ENCODE measurements at regions of chr2 and their contacts with region 1.

Region 1: DNA sequence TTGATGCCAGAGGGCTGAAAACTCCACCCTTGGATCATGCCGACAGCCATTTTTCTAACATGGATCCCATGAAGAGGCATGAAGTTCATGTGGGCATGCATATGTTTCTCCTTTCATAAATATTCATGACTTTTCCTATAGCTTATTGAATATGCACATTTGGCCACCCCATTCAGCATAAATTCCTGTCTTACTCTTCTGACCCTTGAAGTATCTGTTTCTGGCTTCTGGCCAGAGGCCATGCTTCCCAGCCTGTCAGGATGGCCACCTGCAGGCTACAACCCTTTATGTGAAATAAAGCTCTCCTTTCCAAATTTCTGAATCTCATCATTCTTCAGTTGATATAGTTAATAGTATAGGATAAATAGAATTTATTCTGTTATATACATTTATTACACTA is 19.6 kb upstream of the MSTN start:
- H3K4me3 ChIP-seq: no peak overlapping the region
- H3K27ac ChIP-seq: no peak overlapping the region
- H3K4me1 ChIP-seq: no peaks in the 10 kb centered on the region
- CTCF ChIP-seq: no peak

Region 2: DNA sequence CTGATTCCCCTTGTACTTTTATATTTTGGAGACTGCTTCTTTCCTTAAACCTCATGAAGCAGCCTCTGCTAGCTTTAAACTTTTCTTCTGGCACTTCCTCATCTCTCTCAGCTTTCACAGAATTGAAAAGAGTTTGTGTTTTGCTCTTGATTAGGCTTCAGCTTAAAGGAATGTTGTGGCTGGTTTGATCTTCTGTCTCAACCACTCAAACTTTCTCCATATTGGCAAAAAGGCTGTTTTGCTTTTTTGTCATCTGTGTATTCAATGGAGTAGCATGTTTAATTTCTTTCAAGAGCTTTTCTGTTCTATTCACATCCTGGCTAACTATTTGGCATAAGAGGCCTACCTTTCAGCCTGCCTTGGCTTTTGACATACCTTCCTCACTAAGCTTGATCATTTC is 16.7 kb after region 1 on chr2:
- CTCF ChIA-PET with region 1: no interaction called
- POLR2A ChIA-PET with region 1: no interaction called
- H3K4me3 ChIP-seq: no peak overlapping the region
- H3K27ac ChIP-seq: no peak overlapping the region
- H3K4me1 ChIP-seq: no peaks in the 10 kb centered on the region
- CTCF ChIP-seq: no peak

Region 3: DNA sequence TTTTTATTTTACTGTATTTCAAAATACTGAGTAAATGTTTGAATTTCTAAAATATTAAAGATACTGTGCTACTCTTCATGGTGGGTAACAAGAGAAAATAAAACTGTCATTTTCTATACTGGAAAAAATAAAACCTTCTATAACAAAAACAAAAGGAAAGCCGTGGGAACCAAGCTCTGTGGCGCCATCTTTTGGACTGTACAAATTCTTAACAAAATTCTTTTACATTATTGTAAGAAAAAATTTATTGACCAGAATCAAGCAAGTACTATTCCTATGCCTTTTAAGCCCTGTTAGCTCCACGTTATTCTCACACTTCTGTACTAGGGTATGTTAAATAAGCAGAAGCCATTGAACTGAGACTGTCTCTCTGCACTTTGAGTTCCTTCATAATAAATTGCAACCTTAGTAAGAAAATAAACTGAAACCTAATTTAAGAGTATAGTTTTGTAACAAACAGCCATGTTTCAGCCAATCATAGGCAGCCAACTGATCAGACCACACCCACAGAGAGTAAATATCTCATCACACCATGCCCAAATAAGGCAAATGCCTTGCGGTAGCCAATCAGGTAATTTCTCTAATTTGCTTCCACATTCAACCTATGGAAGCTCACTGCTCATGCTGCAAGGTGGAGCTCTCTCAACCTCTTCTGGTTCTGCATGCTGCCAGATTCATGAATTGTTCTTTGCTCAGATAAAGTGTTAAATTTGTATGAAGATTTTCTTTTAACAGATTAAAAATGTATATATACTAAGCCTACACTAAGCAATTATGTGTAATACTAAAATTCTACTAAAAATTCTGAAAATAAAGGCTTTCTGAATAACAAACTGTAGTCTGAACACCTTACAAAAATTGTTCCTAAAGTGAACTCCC is 195.4 kb after region 1 on chr2:
- CTCF ChIA-PET with region 1: interaction called, 10 read pairs
- POLR2A ChIA-PET with region 1: no interaction called
- H3K4me3 ChIP-seq: no peak overlapping the region
- H3K27ac ChIP-seq: no peak overlapping the region
- H3K4me1 ChIP-seq: no peaks in the 10 kb centered on the region
- CTCF ChIP-seq: no peak